GM12878 (cell line): ENCODE measurements at regions of chr12 and their contacts with region 1.

Region 1: DNA sequence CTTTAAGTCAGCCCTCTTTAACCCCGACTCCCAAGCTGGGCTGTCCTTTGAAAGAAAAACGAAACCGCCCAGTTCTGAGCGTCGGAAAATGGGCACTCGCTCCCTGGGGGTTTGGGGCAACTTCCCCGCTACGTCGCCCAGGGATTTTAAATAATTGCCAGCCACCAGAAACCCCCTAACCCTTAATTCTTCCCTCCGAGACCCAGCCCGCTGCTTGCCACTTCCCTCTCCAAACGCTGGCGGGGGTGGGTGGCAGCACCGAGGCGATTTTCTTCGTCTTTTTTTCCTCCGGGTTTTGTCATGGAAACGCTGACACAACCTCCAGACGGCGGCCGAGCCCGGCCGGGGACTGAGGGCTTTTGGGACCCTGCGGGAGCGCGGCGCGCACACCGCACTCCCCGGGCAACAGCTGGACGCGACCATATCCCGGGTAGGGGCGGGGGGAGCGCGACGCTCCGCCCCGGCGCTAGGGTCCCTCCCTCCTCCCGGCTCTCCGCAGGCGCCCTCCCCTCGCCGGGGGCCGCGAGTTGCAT is at the start of gene CHST11:
- DNase-seq: no peak
- ATAC-seq: peak; percentile 76
- H3K4me3 ChIP-seq: peak within 1 kb of the TSS; percentile 100
- H3K27ac ChIP-seq: peak within 1 kb of the TSS; percentile 95
- H3K4me1 ChIP-seq: peaks cover 7% of the 10 kb centered on the region; the same call in 1 of the 2 replicates
- H3K27me3 ChIP-seq: no peaks in the 10 kb centered on the region
- CTCF ChIP-seq: peak; percentile 11 to 21 (median 15); a peak in 2 of 6 replicates
- EP300 ChIP-seq: peak; percentile 38 to 57; a peak in 1 of 4 replicates
- POLR2A ChIP-seq: no peak
- RAD21 ChIP-seq: peak; percentile 20; the same call in 1 of the 2 replicates
- polyA plus RNA-seq, gene CHST11: 1.9 to 2.5 TPM

Region 2: DNA sequence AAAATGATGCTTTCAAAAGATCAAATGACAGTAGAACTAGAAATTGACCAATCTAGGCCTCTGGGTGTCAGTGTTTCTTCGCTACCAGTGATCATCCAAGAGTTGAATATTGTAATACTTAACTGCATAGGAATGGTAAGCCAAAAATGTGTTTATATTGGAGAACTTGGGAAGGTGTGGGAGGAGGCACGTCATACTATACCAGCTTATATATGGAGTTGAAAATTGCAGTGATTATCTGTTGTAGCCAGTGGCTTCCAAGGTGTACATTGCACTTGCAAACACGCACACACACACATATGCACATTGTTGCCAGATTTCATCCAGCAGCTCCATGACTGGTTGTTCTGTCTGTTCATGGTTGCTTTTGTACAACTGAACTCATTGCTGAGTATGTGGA is 116.8 kb before region 1 on chr12:
- CTCF ChIA-PET with region 1: no interaction called
- POLR2A ChIA-PET with region 1: no interaction called
- RAD21 ChIA-PET with region 1: no interaction called
- SMC1A ChIA-PET with region 1: no interaction called
- in situ Hi-C with region 1: no loop called
- intact Hi-C with region 1: no loop called
- DNase-seq: no peak
- ATAC-seq: no peak
- H3K4me3 ChIP-seq: no peak overlapping the region
- H3K27ac ChIP-seq: no peak overlapping the region
- H3K4me1 ChIP-seq: no peaks in the 10 kb centered on the region
- H3K27me3 ChIP-seq: no peaks in the 10 kb centered on the region
- CTCF ChIP-seq: no peak
- EP300 ChIP-seq: no peak
- POLR2A ChIP-seq: no peak
- RAD21 ChIP-seq: no peak

Region 3: GRCh38 chr12:104473374-104473983 is 17.0 kb after region 1 on chr12:
- CTCF ChIA-PET with region 1: interaction called, 16 read pairs
- POLR2A ChIA-PET with region 1: interaction called, 64 read pairs
- RAD21 ChIA-PET with region 1: interaction called, 90 read pairs
- SMC1A ChIA-PET with region 1: interaction called, 73 read pairs
- in situ Hi-C with region 1: no loop called
- intact Hi-C with region 1: no loop called
- DNase-seq: no peak
- ATAC-seq: peak; percentile 76
- H3K4me3 ChIP-seq: peak overlapping the region; percentile 48
- H3K27ac ChIP-seq: peak overlapping the region; percentile 66
- H3K4me1 ChIP-seq: peaks cover 45% of the 10 kb centered on the region
- H3K27me3 ChIP-seq: no peaks in the 10 kb centered on the region
- CTCF ChIP-seq: no peak
- EP300 ChIP-seq: no peak
- POLR2A ChIP-seq: peak; percentile 54; the same call in 1 of the 2 replicates
- RAD21 ChIP-seq: no peak

Region 4: GRCh38 chr12:104485651-104486362 is 29.3 kb after region 1 on chr12:
- CTCF ChIA-PET with region 1: interaction called, 11 read pairs
- POLR2A ChIA-PET with region 1: interaction called, 11 read pairs
- RAD21 ChIA-PET with region 1: interaction called, 90 read pairs
- SMC1A ChIA-PET with region 1: interaction called, 41 read pairs
- in situ Hi-C with region 1: no loop called
- intact Hi-C with region 1: no loop called
- DNase-seq: no peak
- ATAC-seq: peak; percentile 65
- H3K4me3 ChIP-seq: no peak overlapping the region
- H3K27ac ChIP-seq: peak overlapping the region; percentile 52
- H3K4me1 ChIP-seq: peaks cover 35% of the 10 kb centered on the region
- H3K27me3 ChIP-seq: no peaks in the 10 kb centered on the region
- CTCF ChIP-seq: no peak
- EP300 ChIP-seq: no peak
- POLR2A ChIP-seq: no peak
- RAD21 ChIP-seq: no peak

Region 5: GRCh38 chr12:104505095-104505818 is 48.8 kb after region 1 on chr12:
- CTCF ChIA-PET with region 1: interaction called, 5 read pairs
- POLR2A ChIA-PET with region 1: interaction called, 3 read pairs
- RAD21 ChIA-PET with region 1: interaction called, 15 read pairs
- SMC1A ChIA-PET with region 1: interaction called, 8 read pairs
- in situ Hi-C with region 1: no loop called
- intact Hi-C with region 1: no loop called
- DNase-seq: peak; percentile 64
- ATAC-seq: peak; percentile 88
- H3K4me3 ChIP-seq: peak overlapping the region; percentile 37; the same call in 1 of the 2 replicates
- H3K27ac ChIP-seq: peak overlapping the region; percentile 43; the same call in 1 of the 2 replicates
- H3K4me1 ChIP-seq: peaks cover 43% of the 10 kb centered on the region
- H3K27me3 ChIP-seq: no peaks in the 10 kb centered on the region
- CTCF ChIP-seq: no peak
- EP300 ChIP-seq: no peak
- POLR2A ChIP-seq: no peak
- RAD21 ChIP-seq: no peak

Region 6: DNA sequence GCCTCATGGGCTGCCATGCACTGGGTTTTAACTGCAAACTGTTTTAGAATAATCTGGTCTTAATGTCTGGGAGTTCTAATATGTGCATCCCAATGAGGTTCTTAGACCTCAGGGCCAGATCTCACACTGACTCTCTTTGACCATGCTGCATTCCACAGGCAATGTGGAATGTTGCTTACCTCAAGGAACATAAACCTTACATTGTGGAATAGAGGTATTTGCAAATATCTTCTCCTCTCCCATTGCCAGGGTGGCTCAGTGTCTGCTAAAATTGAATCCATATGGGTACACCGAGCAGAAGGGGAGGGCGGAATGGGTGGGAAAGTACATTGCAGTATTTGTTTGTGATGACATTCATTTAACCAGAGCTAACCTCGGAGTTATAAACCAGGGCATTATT is 78.9 kb after region 1 on chr12:
- CTCF ChIA-PET with region 1: interaction called, 3 read pairs
- POLR2A ChIA-PET with region 1: no interaction called
- RAD21 ChIA-PET with region 1: interaction called, 6 read pairs
- SMC1A ChIA-PET with region 1: interaction called, 10 read pairs
- in situ Hi-C with region 1: no loop called
- intact Hi-C with region 1: no loop called
- DNase-seq: no peak
- ATAC-seq: no peak
- H3K4me3 ChIP-seq: no peak overlapping the region
- H3K27ac ChIP-seq: no peak overlapping the region
- H3K4me1 ChIP-seq: peaks cover 9% of the 10 kb centered on the region; the same call in 1 of the 2 replicates
- H3K27me3 ChIP-seq: no peaks in the 10 kb centered on the region
- CTCF ChIP-seq: no peak
- EP300 ChIP-seq: no peak
- POLR2A ChIP-seq: no peak
- RAD21 ChIP-seq: no peak

Region 7: DNA sequence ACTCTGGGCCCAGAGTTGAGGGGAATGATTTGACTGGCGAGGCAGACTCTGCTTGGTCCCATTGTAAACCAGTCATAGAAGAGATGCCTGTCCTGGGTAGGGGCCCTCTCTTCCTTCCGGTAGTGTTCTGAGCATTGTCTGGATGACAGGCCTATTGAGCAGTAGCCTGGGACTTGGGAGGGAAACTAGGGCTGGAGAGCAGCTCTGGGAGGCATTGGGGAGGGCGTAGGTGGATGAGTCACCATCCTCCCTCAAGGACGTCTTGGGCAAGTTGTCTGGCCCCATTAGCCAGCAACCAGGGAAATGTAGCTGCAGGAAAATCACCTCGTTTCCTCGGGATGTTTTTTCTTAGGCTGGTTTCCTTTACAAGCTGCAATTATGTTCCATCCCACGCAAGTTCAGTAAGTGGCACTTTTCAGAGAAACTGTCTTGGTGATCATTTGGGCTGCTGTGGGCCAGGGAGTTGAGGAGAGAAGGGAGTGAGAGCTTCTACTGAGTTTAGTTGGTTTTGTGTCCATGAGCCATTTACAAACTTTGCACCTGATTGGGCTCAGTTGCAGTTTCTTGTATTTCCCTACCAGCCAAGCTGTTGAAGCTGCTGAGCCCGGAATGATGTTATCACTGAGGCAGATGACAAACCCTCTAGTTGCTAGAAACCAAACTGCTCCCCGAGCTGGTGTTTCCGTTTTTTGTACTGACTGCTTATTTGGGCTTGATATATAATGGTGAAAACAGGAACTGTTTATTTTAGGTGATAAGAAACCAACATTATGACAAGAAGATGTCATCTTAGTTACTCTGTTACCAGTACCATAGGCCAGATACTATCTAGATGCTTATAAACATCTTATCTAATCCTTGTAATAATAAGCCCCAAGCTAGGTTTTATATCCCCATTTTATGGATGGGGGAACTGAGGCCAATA is 147.8 kb after region 1 on chr12:
- CTCF ChIA-PET with region 1: interaction called, 4 read pairs
- POLR2A ChIA-PET with region 1: interaction called, 9 read pairs
- RAD21 ChIA-PET with region 1: interaction called, 9 read pairs
- SMC1A ChIA-PET with region 1: interaction called, 14 read pairs
- in situ Hi-C with region 1: no loop called
- intact Hi-C with region 1: no loop called
- DNase-seq: peak; percentile 86
- ATAC-seq: peak; percentile 90
- H3K4me3 ChIP-seq: no peak overlapping the region
- H3K27ac ChIP-seq: peak overlapping the region; percentile 87
- H3K4me1 ChIP-seq: peaks cover 34% of the 10 kb centered on the region
- H3K27me3 ChIP-seq: no peaks in the 10 kb centered on the region
- CTCF ChIP-seq: 0 out of 6 replicates have a peak, but pooled peaks of 1 of the 3 experiments have one; percentile 4
- EP300 ChIP-seq: peak; percentile 36 to 60; a peak in 1 of 4 replicates
- POLR2A ChIP-seq: no peak
- RAD21 ChIP-seq: peak; percentile 32

Region 8: DNA sequence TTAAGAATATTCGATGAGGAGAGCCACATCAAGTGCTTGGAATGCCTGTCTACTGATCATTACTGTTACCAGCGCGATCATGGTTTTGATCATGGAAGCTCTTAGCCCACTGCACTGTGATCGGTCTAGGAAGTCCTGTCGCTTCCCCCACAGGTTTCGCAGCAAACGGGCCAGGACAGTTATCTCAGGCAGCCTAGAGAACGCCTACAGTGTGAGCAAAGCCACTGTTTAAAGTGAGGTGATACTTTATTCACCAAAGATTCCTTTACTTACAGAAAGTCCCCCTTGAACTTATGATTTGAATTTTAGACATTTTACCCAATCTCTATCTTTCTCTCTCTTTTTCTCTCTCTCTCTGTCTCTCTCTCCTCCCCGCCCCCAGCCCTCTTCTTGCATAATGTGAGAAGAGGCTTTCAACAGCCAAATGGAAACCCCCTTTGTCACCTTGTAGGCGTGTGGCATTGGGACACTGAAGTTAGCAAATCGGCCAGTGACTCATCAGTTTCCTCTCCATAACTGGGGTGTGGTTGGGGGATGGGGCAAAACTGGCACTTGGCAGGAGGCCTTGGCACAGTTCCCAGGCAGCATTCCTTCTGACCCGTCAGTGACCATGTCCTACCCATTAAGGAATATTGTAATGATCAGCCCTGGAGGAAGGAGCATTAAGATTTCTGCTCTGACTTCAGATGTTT is 215.1 kb after region 1 on chr12:
- CTCF ChIA-PET with region 1: interaction called, 4 read pairs
- POLR2A ChIA-PET with region 1: interaction called, 4 read pairs
- RAD21 ChIA-PET with region 1: interaction called, 42 read pairs
- SMC1A ChIA-PET with region 1: interaction called, 49 read pairs
- in situ Hi-C with region 1: no loop called
- intact Hi-C with region 1: loop called (anchors 5 kb)
- DNase-seq: peak; percentile 88
- ATAC-seq: peak; percentile 86
- H3K4me3 ChIP-seq: peak overlapping the region; percentile 49
- H3K27ac ChIP-seq: peak overlapping the region; percentile 99
- H3K4me1 ChIP-seq: peaks cover 55% of the 10 kb centered on the region
- H3K27me3 ChIP-seq: no peaks in the 10 kb centered on the region
- CTCF ChIP-seq: no peak
- EP300 ChIP-seq: peak; percentile 84 to 95; a peak in 3 of 4 replicates
- POLR2A ChIP-seq: peak; percentile 73
- RAD21 ChIP-seq: peak; percentile 48